CD14-positive monocyte (primary cell): ENCODE measurements at regions of chr5 and their contacts with region 1.

Region 1: GRCh38 chr5:172833686-172834414 is at the start of gene ERGIC1:
- DNase-seq: peak; percentile 70 to 78 (median 77)
- H3K4me3 ChIP-seq: peak within 1 kb of the TSS; percentile 69 to 84 (median 75)
- H3K4me3 Mint-ChIP-seq: peak within 1 kb of the TSS; percentile 85 to 91
- H3K27ac ChIP-seq: peak within 1 kb of the TSS; percentile 53 to 91
- H3K27ac Mint-ChIP-seq: peak within 1 kb of the TSS; percentile 86 to 96 (median 94)
- H3K4me1 ChIP-seq: peaks cover 51 to 74% of the 10 kb centered on the region in 2 donors
- H3K4me1 Mint-ChIP-seq: peaks cover 62% of the 10 kb centered on the region
- H3K27me3 ChIP-seq: no peaks in the 10 kb centered on the region
- H3K27me3 Mint-ChIP-seq: peaks cover 0 to 2% (median 1%) of the 10 kb centered on the region in 3 donors
- CTCF ChIP-seq: no peak
- polyA plus RNA-seq, gene ERGIC1: 28.3 to 76.2 (median 34.1) TPM

Region 2: DNA sequence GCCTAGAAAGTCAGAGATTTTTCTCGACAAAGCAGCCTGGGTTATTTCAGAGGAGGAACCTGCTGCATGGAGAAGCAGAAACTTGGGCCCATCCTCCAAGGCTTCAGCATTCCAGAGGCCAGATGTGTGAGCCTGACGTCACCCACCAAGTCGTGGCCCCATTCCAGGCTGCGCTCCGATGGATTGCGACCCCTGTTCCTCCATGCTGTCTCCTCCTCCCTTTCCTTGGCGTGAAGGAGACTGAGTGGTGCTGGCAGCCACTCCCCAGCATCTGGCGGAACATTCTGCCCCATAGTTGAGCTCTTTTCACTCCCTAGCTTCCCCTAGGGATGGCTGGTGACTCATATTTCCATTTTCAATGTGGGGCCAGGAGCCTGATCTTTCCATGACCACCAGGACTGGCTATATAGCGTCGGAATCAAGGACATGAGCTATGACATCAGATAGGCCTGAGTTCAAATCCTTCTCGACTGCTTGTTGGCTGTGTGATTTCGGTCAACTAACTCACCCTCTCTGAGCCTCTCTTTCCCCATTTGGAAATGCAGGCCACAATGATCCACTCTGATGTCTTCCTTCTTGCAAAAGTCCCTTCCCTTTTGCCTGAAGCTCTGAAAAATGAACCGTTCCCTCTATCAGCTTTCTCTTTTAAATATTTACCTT is 38.4 kb before region 1 on chr5:
- intact Hi-C with region 1: loop called in 1 of 2 experiments (anchors 5 kb)
- DNase-seq: peak in 1 of 3 donors; percentile 41
- H3K4me3 ChIP-seq: peak overlapping the region in 1 of 3 experiments; percentile 7
- H3K4me3 Mint-ChIP-seq: peak overlapping the region in 1 of 2 donors; percentile 7
- H3K27ac ChIP-seq: peak overlapping the region; percentile 43 to 95
- H3K27ac Mint-ChIP-seq: peak overlapping the region; percentile 83 to 100 (median 97)
- H3K4me1 ChIP-seq: peaks cover 71 to 83% of the 10 kb centered on the region in 2 donors
- H3K4me1 Mint-ChIP-seq: peaks cover 72% of the 10 kb centered on the region
- H3K27me3 ChIP-seq: no peaks in the 10 kb centered on the region
- H3K27me3 Mint-ChIP-seq: peaks cover 0 to 5% (median 2%) of the 10 kb centered on the region in 3 donors
- CTCF ChIP-seq: no peak